Dorsolateral prefrontal cortex (tissue), 120 donors: ENCODE measurements at regions of chr1 and their contacts with region 1.

Region 1: GRCh38 chr1:8374812-8375211 is 56.9 kb downstream of the SLC45A1 start:
- DNase-seq: no peak
- H3K4me3 ChIP-seq: no peak overlapping the region
- H3K27ac ChIP-seq: peak overlapping the region in 47 of 59 donors; percentile 16 to 92 (median 82)
- H3K27me3 ChIP-seq: no peaks in the 10 kb centered on the region
- CTCF ChIP-seq: peak in 38 of 56 donors; percentile 9 to 49 (median 23)

Region 2: DNA sequence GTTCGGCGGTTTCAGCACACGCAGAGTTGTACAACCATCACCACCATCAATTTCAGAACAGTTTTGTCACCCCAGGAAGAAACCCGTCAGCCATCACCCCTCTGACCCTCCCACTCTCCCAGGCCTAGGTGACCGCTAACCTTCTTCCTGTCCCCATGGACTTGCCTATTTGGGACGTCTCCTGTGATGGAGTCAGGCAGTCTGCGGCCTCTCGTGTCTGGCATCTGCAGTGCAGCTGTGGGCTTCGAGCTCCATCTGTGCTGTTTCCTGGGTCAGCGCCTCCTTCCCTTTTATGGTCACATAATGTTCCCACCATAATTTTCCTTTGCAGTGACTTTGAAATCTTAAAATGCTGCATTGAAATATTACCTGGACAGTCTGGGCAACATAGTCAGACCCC is 32.5 kb before region 1 on chr1:
- intact Hi-C with region 1: no loop called
- DNase-seq: no peak
- H3K4me3 ChIP-seq: no peak overlapping the region
- H3K27ac ChIP-seq: no peak overlapping the region
- H3K27me3 ChIP-seq: no peaks in the 10 kb centered on the region
- CTCF ChIP-seq: no peak

Region 3: DNA sequence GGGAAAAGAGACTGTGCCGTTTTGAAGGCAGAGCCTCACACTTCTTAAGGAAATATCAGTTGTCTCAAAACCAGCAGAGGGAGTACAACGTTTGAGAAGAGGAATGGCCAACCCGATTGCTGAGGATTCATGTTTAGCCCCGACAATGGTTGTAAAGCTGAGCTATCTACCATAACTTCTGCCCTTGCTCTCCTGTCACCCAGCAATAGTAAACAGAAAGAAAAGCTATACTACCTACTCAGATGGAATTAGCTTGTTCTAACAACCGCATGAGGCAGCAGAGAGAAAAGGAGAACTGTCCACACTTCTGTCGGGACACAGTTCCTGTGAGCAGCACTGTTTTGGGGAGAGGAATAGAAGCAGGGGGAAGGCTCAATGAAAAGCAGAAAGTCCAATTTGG is 34.3 kb after region 1 on chr1:
- intact Hi-C with region 1: loop called in 1 of 2 experiments (anchors 5 kb)
- DNase-seq: peak in 1 of 10 donors; percentile 33
- H3K4me3 ChIP-seq: peak overlapping the region in 17 of 59 donors; percentile 1 to 35 (median 13)
- H3K27ac ChIP-seq: peak overlapping the region in 58 of 59 donors; percentile 19 to 96 (median 73)
- H3K27me3 ChIP-seq: no peaks in the 10 kb centered on the region
- CTCF ChIP-seq: peak in 55 of 56 donors; percentile 19 to 66 (median 48)

Region 4: GRCh38 chr1:8510041-8510823 is 135.4 kb after region 1 on chr1:
- intact Hi-C with region 1: loop called in 1 of 2 experiments (anchors 5 kb)
- DNase-seq: peak in 4 of 10 donors; percentile 53 to 64 (median 58)
- H3K4me3 ChIP-seq: peak overlapping the region in 39 of 59 donors; percentile 0 to 53 (median 25)
- H3K27ac ChIP-seq: peak overlapping the region; percentile 0 to 92 (median 82)
- H3K27me3 ChIP-seq: no peaks in the 10 kb centered on the region
- CTCF ChIP-seq: peak in 1 of 56 donors; percentile 7